Activated CD4-positive, alpha-beta memory T cell treated with anti-CD3 and anti-CD28 coated beads for 36 hours (primary cell): ENCODE measurements at regions of chr11 and their contacts with region 1.

Region 1: DNA sequence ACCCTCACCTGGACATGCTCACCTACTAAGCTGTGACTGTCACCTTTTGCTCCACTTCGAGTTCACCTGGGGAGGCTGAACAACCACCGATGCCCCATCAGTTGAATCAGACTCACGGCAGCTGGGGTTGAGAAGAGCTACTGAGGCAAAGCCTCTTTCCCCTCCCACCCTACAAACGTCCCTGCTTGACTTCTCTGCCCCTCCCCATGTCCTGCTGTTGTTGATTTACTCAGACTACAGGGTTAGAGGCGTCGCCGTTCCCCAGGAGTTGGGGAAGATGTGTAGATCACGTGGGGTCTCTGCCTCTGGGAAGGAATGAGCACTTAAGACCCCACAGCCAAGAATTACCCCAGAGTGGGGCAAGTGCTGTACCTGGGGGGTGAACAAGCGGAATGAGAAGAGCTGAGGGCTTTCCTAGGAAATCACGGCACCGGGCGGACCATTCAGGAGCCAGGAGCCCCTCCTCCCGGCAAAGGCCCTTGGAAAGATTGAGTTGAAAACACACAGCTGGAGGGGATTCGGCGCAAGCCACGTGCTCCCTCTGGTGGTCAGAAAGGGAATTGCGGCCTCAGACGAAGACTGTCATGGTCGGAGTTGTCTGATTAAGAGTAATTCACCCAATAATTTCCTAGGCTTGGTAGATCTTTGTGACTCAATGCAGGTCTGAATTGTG is 7.0 kb downstream of the FXYD2 start:
- DNase-seq: peak; percentile 96
- H3K4me3 Mint-ChIP-seq: peak overlapping the region; percentile 42
- H3K27ac Mint-ChIP-seq: peak overlapping the region; percentile 94
- H3K4me1 Mint-ChIP-seq: peaks cover 62% of the 10 kb centered on the region
- H3K27me3 Mint-ChIP-seq: no peaks in the 10 kb centered on the region

Region 2: DNA sequence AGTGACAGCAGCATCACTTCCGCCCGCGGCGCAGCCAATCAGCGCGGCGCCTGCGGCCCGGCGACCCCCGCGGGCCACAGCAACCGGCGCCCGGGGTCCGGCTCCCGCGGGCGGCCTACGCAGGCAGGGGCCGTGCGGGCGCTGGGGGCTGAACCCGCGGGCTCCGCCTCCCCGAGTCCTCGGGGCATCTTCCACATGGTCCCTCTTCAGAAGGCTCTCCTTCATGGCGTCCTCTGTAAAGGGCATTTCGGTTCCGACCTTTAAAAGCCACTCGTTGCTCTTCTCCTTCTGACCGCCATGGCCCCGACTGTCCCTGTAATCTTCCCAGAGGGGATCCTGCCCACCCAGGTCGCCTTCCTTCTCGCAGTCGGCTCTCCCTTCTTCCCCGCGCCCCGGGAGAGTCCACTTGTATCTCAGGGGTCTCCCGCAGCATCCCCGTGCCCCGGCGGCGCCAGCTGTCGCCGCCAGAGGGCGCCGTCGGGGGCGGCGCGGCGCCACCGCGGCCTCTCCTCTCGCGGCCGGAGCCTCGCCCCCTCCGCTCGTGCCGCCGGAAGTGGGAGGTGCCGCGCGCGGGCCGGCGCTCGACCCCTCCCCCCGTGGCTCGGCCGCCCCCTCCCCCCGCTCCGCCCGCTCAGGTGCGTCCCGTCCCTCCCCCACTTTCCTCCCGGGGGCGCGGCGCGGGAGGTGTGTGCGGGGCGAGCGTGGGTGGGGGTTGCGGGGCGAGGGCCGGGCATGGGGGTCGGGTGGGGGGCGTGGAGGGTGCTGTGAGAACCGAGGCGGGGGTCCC is 585.2 kb before region 1 on chr11 and contains the start of gene RNF214:
- CTCF ChIA-PET with region 1: no interaction called
- POLR2A ChIA-PET with region 1: no interaction called
- intact Hi-C with region 1: loop called (anchors 5 kb)
- DNase-seq: peak; percentile 83
- H3K4me3 Mint-ChIP-seq: peak within 1 kb of the TSS; percentile 99
- H3K27ac Mint-ChIP-seq: peak within 1 kb of the TSS; percentile 98
- H3K4me1 Mint-ChIP-seq: peaks cover 37% of the 10 kb centered on the region
- H3K27me3 Mint-ChIP-seq: no peaks in the 10 kb centered on the region
- total RNA-seq, gene RNF214: 16.9 to 18.3 TPM

Region 3: DNA sequence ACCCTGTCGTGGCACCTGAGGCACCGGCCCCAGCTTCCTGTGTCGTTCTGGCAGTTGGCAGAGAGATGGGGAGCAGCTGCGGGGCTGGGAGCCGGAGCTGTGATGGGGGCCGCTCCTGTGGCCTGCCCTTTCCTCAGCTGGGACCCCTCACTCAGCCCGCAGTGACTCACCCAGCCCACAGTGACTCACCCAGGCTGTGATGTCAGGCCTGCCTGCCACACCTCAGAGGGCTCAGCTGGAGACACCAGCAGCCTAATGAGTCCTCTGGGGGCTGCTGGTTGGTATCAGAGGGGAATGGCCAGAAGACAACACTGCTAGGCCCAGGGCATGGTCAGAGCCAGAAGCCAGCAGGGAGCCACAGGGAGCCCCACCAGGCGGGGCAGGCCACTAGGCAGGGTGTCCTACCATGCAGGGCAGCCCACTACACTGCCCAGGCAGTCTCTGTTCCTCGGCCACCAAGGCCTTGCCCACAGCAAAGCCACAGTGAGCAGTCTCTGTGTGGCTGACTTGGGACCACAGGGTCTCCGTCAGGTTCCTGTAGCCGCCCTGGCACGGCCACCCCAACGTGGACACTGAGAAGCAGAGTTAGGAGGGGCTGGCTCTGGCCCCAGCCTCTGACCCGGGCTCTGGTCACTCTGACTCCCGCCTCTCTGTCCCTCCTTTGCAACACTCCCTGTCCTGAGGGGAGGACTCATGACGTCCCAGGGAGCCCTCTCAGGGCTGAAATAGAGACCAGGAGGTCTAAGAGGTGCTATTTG is 11.3 kb after region 1 on chr11:
- CTCF ChIA-PET with region 1: interaction called, 25 read pairs
- POLR2A ChIA-PET with region 1: interaction called, 3 read pairs
- intact Hi-C with region 1: no loop called
- DNase-seq: peak; percentile 91
- H3K4me3 Mint-ChIP-seq: no peak overlapping the region
- H3K27ac Mint-ChIP-seq: peak overlapping the region; percentile 28
- H3K4me1 Mint-ChIP-seq: peaks cover 45% of the 10 kb centered on the region
- H3K27me3 Mint-ChIP-seq: no peaks in the 10 kb centered on the region

Region 4: GRCh38 chr11:117907251-117907981 is 89.9 kb after region 1 on chr11:
- CTCF ChIA-PET with region 1: interaction called, 3 read pairs
- POLR2A ChIA-PET with region 1: interaction called, 3 read pairs
- intact Hi-C with region 1: loop called (anchors 5 kb)
- DNase-seq: peak; percentile 87
- H3K4me3 Mint-ChIP-seq: peak overlapping the region; percentile 45
- H3K27ac Mint-ChIP-seq: peak overlapping the region; percentile 8
- H3K4me1 Mint-ChIP-seq: peaks cover 13% of the 10 kb centered on the region
- H3K27me3 Mint-ChIP-seq: no peaks in the 10 kb centered on the region

Region 5: GRCh38 chr11:117919781-117920221 is 102.3 kb after region 1 on chr11:
- CTCF ChIA-PET with region 1: no interaction called
- POLR2A ChIA-PET with region 1: no interaction called
- intact Hi-C with region 1: no loop called
- DNase-seq: peak; percentile 45
- H3K4me3 Mint-ChIP-seq: no peak overlapping the region
- H3K27ac Mint-ChIP-seq: no peak overlapping the region
- H3K4me1 Mint-ChIP-seq: peaks cover 9% of the 10 kb centered on the region
- H3K27me3 Mint-ChIP-seq: no peaks in the 10 kb centered on the region

Region 6: DNA sequence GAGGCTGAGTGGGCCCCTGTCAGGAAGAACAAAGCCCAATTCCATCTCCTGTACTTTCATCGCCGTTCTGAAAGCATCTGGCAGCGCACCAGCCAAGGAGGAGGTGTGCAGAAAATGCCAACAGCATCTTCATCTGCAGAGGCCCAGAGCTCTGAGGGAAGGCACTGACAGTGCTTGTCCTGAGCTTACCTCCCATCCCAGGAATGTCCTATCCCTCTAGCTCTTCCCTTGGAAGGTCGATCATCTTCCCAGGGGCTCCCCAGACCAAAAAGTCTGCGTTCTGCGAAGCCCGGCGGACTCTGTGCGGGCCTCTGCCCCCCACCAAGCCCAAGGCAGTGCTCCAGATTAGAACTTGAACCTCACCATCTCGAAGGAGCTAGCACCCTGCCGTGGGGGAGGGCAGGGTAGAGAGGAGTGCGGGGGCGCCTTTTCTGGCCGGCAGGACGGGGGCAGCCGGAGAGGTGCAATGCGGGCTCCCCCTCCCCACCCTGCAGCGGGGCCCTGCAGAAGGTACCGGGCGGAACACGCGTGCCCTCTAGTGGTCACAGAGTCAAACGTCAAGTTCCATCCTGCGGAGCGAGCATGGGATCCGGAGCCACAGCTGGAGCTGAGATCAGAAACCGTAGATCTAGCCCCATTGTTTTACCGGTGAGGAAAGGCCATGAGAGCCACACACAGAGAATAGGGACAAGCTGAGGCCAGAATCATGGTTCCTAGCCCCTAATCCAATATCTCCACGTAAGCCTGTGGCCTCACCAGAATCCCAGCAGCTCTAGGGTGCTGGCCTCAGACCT is 354.0 kb after region 1 on chr11:
- CTCF ChIA-PET with region 1: interaction called, 11 read pairs
- POLR2A ChIA-PET with region 1: no interaction called
- intact Hi-C with region 1: no loop called
- DNase-seq: peak; percentile 81
- H3K4me3 Mint-ChIP-seq: no peak overlapping the region
- H3K27ac Mint-ChIP-seq: no peak overlapping the region
- H3K4me1 Mint-ChIP-seq: no peaks in the 10 kb centered on the region
- H3K27me3 Mint-ChIP-seq: peaks cover 9% of the 10 kb centered on the region